ENCODE measurements at regions of chr3 and their contacts with region 1.

Region 1: GRCh38 chr3:143119009-143119914 is at the start of gene CHST2:
- DNase-seq: peak; percentile 60 to 78 (median 74)
- ATAC-seq: peak; percentile 85
- H3K4me3 ChIP-seq: peak within 1 kb of the TSS; percentile 95
- H3K4me3 Mint-ChIP-seq: peak within 1 kb of the TSS; percentile 90 to 97 (median 94)
- H3K27ac ChIP-seq: peak within 1 kb of the TSS; percentile 76
- H3K27ac Mint-ChIP-seq: peak within 1 kb of the TSS; percentile 81 to 93 (median 87)
- H3K4me1 ChIP-seq: peaks cover 0 to 29% of the 10 kb centered on the region in 2 donors
- H3K4me1 Mint-ChIP-seq: peaks cover 21 to 54% (median 45%) of the 10 kb centered on the region in 7 donors
- H3K27me3 ChIP-seq: no peaks in the 10 kb centered on the region
- H3K27me3 Mint-ChIP-seq: peaks cover 0 to 19% (median 0%) of the 10 kb centered on the region in 5 donors
- total RNA-seq, gene CHST2: 3.4 to 12.3 (median 4.5) TPM

Region 2: DNA sequence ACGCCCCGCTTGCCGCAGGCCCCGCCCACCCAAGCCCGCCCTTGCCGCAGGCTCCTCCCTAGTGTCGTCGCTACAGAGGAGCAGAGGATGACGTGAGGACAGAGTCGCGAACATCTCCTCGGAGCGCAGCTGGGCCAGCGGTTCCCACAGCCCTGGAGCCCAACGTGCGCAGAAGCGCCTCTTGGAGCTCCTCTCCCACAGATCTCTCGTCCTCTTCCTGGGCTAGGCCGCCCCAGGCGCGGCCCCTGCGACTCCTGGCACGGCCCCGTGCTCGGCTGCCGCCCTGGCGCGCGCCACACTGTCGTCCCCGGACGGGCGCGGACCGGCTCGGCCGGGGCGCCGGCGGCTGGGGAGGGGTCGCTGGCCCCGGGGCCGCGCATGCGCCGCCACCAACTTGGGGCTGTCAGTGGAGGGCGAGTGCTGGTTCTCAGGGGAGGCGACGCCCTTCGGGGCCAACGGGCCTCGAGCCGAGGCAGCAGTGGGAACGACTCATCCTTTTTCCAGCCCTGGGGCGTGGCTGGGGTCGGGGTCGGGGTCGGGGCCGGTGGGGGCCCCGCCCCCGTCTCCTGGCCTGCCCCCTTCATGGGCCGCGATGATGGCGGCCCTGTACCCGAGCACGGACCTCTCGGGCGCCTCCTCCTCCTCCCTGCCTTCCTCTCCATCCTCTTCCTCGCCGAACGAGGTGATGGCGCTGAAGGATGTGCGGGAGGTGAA is 395.1 kb before region 1 on chr3 and contains the start of gene TRPC1:
- CTCF ChIA-PET with region 1: no interaction called
- POLR2A ChIA-PET with region 1: no interaction called
- intact Hi-C with region 1: loop called in 1 of 2 experiments (anchors 2 kb)
- DNase-seq: peak in 8 of 9 donors; percentile 58 to 83 (median 78)
- ATAC-seq: peak; percentile 97
- H3K4me3 ChIP-seq: peak within 1 kb of the TSS; percentile 76
- H3K4me3 Mint-ChIP-seq: peak within 1 kb of the TSS; percentile 80 to 92 (median 88)
- H3K27ac ChIP-seq: peak within 1 kb of the TSS; percentile 76
- H3K27ac Mint-ChIP-seq: peak within 1 kb of the TSS; percentile 31 to 94 (median 88)
- H3K4me1 ChIP-seq: peaks cover 0 to 4% of the 10 kb centered on the region in 2 donors
- H3K4me1 Mint-ChIP-seq: peaks cover 5 to 20% (median 11%) of the 10 kb centered on the region in 7 donors
- H3K27me3 ChIP-seq: peaks cover 0 to 2% of the 10 kb centered on the region in 2 donors
- H3K27me3 Mint-ChIP-seq: peaks cover 20 to 67% (median 22%) of the 10 kb centered on the region in 5 donors
- total RNA-seq, gene TRPC1: 1.5 to 7.6 (median 5.3) TPM

Region 3: DNA sequence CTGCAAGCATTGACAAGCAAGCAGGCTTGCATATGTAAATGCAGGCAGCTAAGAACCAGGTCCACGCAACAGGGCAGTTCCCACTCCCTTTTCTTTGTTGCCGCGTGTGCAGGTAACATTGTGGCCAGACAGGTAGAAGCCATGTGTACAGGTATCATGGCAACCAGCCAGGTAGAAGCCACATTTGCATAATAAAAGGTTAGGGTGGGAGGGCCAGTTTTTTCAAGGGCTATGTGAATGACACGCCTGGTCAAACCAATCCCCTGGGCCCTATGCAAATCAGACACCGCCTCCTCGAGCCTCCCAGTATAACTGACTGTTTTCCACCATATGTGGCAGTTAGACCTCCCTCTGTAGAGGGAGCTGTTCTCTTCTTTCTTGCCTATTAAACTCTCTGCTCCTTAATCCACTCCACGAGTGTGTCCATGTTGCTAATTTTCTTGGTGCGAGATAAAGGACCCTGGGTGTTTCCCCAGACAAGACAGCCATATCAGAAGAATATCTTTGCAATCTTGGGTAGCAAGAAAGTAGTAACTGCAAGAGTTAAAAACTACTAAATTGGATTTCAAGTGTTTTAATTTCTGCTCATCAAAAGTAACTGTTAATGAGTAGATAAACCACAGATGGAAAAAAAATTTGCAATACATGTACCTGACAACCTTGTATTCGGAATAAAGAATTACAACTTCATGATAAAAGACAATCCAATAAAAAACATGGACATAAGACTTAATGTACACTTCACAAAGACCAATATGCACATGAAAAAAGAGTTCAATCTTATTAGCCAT is 252.2 kb before region 1 on chr3:
- CTCF ChIA-PET with region 1: no interaction called
- POLR2A ChIA-PET with region 1: no interaction called
- intact Hi-C with region 1: no loop called
- DNase-seq: no peak
- ATAC-seq: no peak
- H3K4me3 ChIP-seq: no peak overlapping the region
- H3K4me3 Mint-ChIP-seq: no peak overlapping the region
- H3K27ac ChIP-seq: no peak overlapping the region
- H3K27ac Mint-ChIP-seq: no peak overlapping the region
- H3K4me1 ChIP-seq: no peaks in the 10 kb centered on the region
- H3K4me1 Mint-ChIP-seq: peaks cover 0 to 7% (median 4%) of the 10 kb centered on the region in 7 donors
- H3K27me3 ChIP-seq: no peaks in the 10 kb centered on the region
- H3K27me3 Mint-ChIP-seq: peaks cover 0 to 20% (median 11%) of the 10 kb centered on the region in 5 donors

Region 4: GRCh38 chr3:143294188-143294587 is 174.9 kb after region 1 on chr3:
- CTCF ChIA-PET with region 1: interaction called, 4 read pairs
- POLR2A ChIA-PET with region 1: no interaction called
- intact Hi-C with region 1: loop called in 1 of 2 experiments (anchors 5 kb)
- DNase-seq: no peak
- ATAC-seq: peak; percentile 32
- H3K4me3 ChIP-seq: no peak overlapping the region
- H3K4me3 Mint-ChIP-seq: peak overlapping the region in 4 of 10 donors; percentile 5 to 36 (median 12)
- H3K27ac ChIP-seq: no peak overlapping the region
- H3K27ac Mint-ChIP-seq: peak overlapping the region in 3 of 9 donors; percentile 2 to 15 (median 9)
- H3K4me1 ChIP-seq: peaks cover 0 to 6% of the 10 kb centered on the region in 2 donors
- H3K4me1 Mint-ChIP-seq: peaks cover 16 to 42% (median 35%) of the 10 kb centered on the region in 7 donors
- H3K27me3 ChIP-seq: no peaks in the 10 kb centered on the region
- H3K27me3 Mint-ChIP-seq: no peaks in the 10 kb centered on the region

Region 5: DNA sequence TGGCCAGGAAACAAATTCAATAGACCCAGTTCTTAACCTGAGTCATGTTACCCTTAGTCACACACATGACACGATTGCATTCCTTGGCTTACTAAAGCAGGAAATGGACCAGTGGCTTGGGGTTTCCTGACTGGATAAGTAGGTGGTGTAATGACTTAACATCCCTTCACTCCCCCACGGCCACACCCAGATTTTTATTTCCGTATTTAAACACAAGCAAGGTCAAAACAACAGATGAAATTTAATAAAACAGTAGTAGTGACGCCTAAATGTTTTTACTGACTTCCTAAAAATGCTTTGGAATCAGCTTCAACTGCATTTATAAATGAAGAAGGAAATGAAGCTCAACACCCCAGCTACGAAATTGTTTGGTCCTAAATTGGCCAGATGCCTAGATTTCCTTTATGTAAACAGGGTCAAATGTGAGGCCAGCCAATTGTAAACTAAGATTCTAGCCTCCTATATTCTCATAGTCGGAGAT is 324.6 kb after region 1 on chr3:
- CTCF ChIA-PET with region 1: no interaction called
- POLR2A ChIA-PET with region 1: no interaction called
- intact Hi-C with region 1: loop called in 1 of 2 experiments (anchors 10 kb)
- DNase-seq: peak in 1 of 9 donors; percentile 30
- ATAC-seq: peak; percentile 90
- H3K4me3 ChIP-seq: no peak overlapping the region
- H3K4me3 Mint-ChIP-seq: peak overlapping the region in 7 of 10 donors; percentile 9 to 51 (median 26)
- H3K27ac ChIP-seq: no peak overlapping the region
- H3K27ac Mint-ChIP-seq: peak overlapping the region in 2 of 9 donors; percentile 9 to 58
- H3K4me1 ChIP-seq: peaks cover 7 to 18% of the 10 kb centered on the region in 2 donors
- H3K4me1 Mint-ChIP-seq: peaks cover 19 to 27% (median 27%) of the 10 kb centered on the region in 7 donors
- H3K27me3 ChIP-seq: no peaks in the 10 kb centered on the region
- H3K27me3 Mint-ChIP-seq: no peaks in the 10 kb centered on the region

Region 6: GRCh38 chr3:143751643-143752178 is 632.4 kb after region 1 on chr3:
- CTCF ChIA-PET with region 1: interaction called, 4 read pairs
- POLR2A ChIA-PET with region 1: no interaction called
- intact Hi-C with region 1: loop called in 1 of 2 experiments (anchors 2 kb)
- DNase-seq: peak; percentile 12 to 83 (median 75)
- ATAC-seq: peak; percentile 80
- H3K4me3 ChIP-seq: peak overlapping the region; percentile 42
- H3K4me3 Mint-ChIP-seq: peak overlapping the region; percentile 67 to 89 (median 78)
- H3K27ac ChIP-seq: peak overlapping the region; percentile 63
- H3K27ac Mint-ChIP-seq: peak overlapping the region; percentile 88 to 100 (median 94)
- H3K4me1 ChIP-seq: peaks cover 16 to 35% of the 10 kb centered on the region in 2 donors
- H3K4me1 Mint-ChIP-seq: peaks cover 20 to 71% (median 68%) of the 10 kb centered on the region in 7 donors
- H3K27me3 ChIP-seq: no peaks in the 10 kb centered on the region
- H3K27me3 Mint-ChIP-seq: no peaks in the 10 kb centered on the region

Measured in naive thymus-derived CD4-positive, alpha-beta T cell (primary cell).